Common myeloid progenitor, CD34-positive (primary cell): ENCODE measurements at regions of chr18 and their contacts with region 1.

Region 1: GRCh38 chr18:45384137-45384961 is 230.9 kb upstream of the SLC14A2 start:
- DNase-seq: peak; percentile 72 to 83 (median 80)
- H3K4me3 ChIP-seq: peak overlapping the region in 2 of 7 experiments; percentile 6 to 8
- H3K27ac ChIP-seq: no peak overlapping the region
- H3K4me1 ChIP-seq: peaks cover 6 to 20% (median 12%) of the 10 kb centered on the region in 4 experiments
- H3K27me3 ChIP-seq: peaks cover 0 to 2% (median 0%) of the 10 kb centered on the region in 5 experiments

Region 2: GRCh38 chr18:43620936-43621335 is 1763.4 kb before region 1 on chr18:
- CTCF ChIA-PET with region 1: interaction called, 36 read pairs
- POLR2A ChIA-PET with region 1: no interaction called
- DNase-seq: peak; percentile 20 to 36 (median 27)
- H3K4me3 ChIP-seq: no peak overlapping the region
- H3K27ac ChIP-seq: no peak overlapping the region
- H3K4me1 ChIP-seq: no peaks in the 10 kb centered on the region
- H3K27me3 ChIP-seq: no peaks in the 10 kb centered on the region

Region 3: DNA sequence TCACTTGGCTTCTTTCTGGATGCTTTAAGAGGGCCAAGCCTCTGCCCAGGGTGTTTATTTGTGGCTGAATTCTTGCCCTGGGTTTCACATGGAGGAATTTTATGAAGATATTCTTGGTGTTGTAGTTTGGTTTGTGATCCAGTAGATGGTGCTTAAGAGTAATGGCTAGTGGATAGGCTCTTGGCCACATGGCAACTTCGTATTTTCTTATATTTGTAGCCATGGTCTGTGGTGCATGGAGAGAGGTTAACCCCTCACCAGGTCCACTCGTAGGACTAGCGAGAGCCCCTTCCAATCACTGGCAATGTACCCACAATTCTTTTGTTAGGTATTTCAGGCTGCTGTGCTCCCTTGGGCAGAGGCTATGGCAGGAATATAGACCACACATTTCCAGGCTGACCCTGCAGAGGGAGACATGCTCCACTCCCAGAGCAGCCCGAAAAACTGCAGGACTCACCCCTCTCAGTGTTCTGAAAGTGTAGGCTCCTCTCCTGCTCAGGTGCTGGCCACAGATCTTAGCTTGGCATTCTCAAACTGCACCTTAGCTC is 1285.7 kb before region 1 on chr18:
- CTCF ChIA-PET with region 1: interaction called, 44 read pairs
- POLR2A ChIA-PET with region 1: no interaction called
- DNase-seq: peak; percentile 15 to 52 (median 52)
- H3K4me3 ChIP-seq: peak overlapping the region in 1 of 7 experiments; percentile 24
- H3K27ac ChIP-seq: no peak overlapping the region
- H3K4me1 ChIP-seq: no peaks in the 10 kb centered on the region
- H3K27me3 ChIP-seq: no peaks in the 10 kb centered on the region

Region 4: DNA sequence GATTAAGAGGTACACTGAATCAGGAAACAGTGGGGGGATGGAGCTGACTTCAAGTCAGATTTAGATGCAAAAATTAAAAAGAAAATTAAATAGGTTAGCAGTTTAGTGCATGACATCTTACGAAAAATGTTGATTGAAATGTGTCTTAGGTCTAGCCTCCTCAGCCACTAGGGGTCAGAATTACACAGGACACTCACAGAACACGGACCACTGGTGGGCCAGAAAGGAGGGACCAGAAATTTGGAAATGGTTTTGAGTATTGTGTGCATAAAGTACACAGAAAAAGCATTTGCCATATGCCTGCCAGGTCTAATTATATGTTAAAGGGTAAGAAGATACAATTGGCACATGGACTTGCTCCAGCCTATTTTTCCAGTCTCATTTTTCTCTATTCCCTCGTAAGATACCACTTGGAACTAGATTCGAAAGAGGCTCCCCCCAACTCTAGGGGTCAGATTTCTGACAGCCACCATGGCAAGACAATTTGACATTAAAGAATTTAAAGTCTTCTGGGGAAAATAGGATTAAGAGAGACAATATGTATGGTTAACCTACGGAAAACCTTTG is 1253.9 kb before region 1 on chr18:
- CTCF ChIA-PET with region 1: interaction called, 19 read pairs
- POLR2A ChIA-PET with region 1: no interaction called
- DNase-seq: peak; percentile 46 to 71 (median 65)
- H3K4me3 ChIP-seq: no peak overlapping the region
- H3K27ac ChIP-seq: no peak overlapping the region
- H3K4me1 ChIP-seq: peaks cover 0 to 5% (median under 1%) of the 10 kb centered on the region in 4 experiments
- H3K27me3 ChIP-seq: no peaks in the 10 kb centered on the region

Region 5: GRCh38 chr18:45161850-45162249 is 222.5 kb before region 1 on chr18:
- CTCF ChIA-PET with region 1: no interaction called
- POLR2A ChIA-PET with region 1: no interaction called
- DNase-seq: peak in 2 of 3 donors; percentile 29 to 44
- H3K4me3 ChIP-seq: no peak overlapping the region
- H3K27ac ChIP-seq: no peak overlapping the region
- H3K4me1 ChIP-seq: peaks cover 2 to 5% (median 3%) of the 10 kb centered on the region in 4 experiments
- H3K27me3 ChIP-seq: no peaks in the 10 kb centered on the region

Region 6: DNA sequence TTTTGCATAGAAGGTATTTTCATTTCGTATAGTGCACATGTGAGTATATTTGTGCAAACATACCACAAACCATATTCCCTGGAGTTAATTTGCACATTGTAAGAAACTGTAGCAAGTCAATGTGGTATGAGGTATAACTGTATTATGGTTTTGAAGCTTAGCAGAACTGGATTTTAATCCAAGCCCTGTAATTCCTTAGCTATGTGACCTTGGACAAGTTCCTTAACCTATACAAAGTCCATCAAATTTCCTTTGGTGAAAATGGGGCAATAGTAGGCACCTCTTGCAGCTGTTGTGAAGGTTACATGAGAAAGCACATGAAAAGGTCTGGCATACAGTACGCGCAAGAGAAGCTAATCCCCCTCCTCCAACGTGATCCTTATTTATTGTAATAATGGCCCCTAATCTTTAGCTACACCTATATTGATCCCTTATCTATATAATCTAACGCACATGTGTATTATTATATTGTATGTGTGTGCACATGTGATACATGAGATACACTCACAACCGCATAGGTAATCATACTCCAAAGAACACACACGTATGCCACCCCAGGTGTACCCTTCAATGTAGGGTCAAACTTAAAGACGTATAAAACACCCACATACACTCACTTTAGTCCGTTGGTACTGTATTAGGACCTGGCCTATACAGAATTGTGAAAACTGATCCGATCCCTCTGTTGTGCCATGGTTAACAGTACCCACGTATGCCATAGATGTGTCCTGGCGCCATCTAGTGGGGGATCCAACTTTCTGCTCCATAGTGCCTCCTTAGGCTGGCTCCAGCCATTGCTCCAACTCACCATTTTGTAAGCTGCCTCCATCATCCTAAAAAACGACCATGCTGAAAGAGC is 171.9 kb before region 1 on chr18:
- CTCF ChIA-PET with region 1: interaction called, 12 read pairs
- POLR2A ChIA-PET with region 1: no interaction called
- DNase-seq: peak; percentile 86 to 92 (median 86)
- H3K4me3 ChIP-seq: no peak overlapping the region
- H3K27ac ChIP-seq: no peak overlapping the region
- H3K4me1 ChIP-seq: no peaks in the 10 kb centered on the region
- H3K27me3 ChIP-seq: no peaks in the 10 kb centered on the region

Region 7: GRCh38 chr18:45373286-45373880 is 11.0 kb before region 1 on chr18:
- CTCF ChIA-PET with region 1: interaction called, 13 read pairs
- POLR2A ChIA-PET with region 1: no interaction called
- DNase-seq: peak; percentile 65 to 87 (median 81)
- H3K4me3 ChIP-seq: peak overlapping the region in 2 of 7 experiments; percentile 3 to 43
- H3K27ac ChIP-seq: no peak overlapping the region
- H3K4me1 ChIP-seq: peaks cover 6 to 43% (median 32%) of the 10 kb centered on the region in 4 experiments
- H3K27me3 ChIP-seq: no peaks in the 10 kb centered on the region

Region 8: GRCh38 chr18:45408218-45408617 is 23.9 kb after region 1 on chr18:
- CTCF ChIA-PET with region 1: interaction called, 13 read pairs
- POLR2A ChIA-PET with region 1: no interaction called
- DNase-seq: no peak
- H3K4me3 ChIP-seq: no peak overlapping the region
- H3K27ac ChIP-seq: no peak overlapping the region
- H3K4me1 ChIP-seq: no peaks in the 10 kb centered on the region
- H3K27me3 ChIP-seq: no peaks in the 10 kb centered on the region

Region 9: DNA sequence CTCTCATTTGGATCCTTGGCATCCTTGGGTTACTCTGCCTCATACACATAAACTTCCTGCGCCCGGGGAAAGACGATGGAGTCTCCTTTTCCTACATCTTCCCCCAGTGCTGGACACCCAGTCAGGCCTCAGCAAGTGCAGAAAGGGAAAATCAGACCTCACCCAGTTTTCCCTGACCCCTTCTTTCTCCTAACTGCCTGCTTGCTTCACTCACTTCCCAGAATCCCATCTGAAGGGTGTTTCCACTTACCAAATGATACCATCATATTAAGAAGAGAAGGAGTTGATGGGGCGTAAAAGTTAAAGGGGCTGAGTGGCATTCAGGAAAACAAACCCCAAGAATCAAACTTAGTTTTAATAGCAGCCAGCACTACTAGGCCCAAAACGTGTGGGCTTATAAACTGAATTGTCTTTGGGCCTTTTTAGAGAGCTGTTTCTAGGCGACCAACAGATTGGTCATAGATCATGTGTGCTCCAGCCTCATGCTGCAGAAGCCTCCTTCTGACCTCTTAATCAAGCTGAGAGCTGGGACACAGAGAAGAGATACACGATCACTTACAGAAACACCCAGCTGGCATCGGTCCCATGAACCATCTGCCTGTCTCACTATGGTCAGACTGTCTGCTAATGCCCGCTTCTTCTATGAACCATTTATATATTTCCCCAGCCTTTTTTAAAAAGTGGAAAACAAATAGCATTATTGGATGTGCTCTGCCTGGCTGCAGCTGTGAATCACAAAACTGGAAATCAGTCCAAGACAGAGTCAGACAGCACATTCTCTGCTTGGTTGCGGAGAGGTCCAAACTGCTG is 65.3 kb after region 1 on chr18:
- CTCF ChIA-PET with region 1: no interaction called
- POLR2A ChIA-PET with region 1: no interaction called
- DNase-seq: no peak
- H3K4me3 ChIP-seq: no peak overlapping the region
- H3K27ac ChIP-seq: no peak overlapping the region
- H3K4me1 ChIP-seq: no peaks in the 10 kb centered on the region
- H3K27me3 ChIP-seq: no peaks in the 10 kb centered on the region